ENCODE measurements at regions of chr15 and their contacts with region 1.

Region 1: DNA sequence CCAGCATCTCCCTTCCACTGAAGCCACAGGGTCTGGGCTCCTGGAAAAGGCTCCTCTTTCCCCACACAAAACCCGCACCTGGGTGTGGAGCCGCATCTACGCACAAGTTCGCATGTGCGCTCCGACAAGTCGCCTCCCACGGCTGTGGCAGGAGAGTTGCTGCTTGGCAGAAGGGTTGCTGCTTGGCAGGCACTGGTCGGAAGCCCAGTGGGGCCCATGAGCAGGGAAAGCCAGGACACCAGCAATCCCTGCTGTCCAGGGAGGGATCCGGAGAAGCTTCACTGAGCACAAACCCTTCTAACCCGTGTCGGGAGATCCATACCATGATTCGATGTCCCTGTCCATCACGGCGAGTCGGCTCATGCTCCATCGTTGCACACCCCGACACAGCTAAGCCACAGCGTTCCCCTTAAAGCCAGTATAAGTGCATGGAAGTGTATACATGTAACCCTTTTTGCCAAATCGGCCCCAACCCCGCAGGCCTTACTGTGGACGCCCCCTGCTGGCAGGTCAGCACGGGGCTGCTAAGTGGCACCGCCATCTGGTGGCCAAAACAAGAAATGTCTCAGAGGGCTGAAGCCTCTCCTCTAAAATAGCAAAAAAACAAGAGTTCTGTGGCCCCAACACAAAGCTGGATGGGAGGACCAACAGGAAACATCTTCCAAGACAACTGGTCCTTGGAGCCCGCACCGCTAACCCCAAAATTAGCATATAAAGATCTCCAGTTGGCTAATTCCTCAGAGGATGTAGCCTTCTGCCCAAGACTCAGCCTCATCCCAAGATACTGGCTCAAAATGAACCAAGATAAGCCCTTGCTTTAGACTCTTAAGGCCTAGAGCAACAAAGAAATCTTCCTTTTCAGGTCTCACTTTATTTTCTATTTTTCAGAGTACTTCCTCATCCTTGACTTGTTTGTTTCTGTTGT is 8.3 kb downstream of the ANKRD63 start:
- DNase-seq: peak; percentile 89
- ATAC-seq: peak; percentile 81
- H3K4me3 Mint-ChIP-seq: no peak overlapping the region
- H3K27ac Mint-ChIP-seq: no peak overlapping the region
- H3K4me1 Mint-ChIP-seq: no peaks in the 10 kb centered on the region
- H3K27me3 Mint-ChIP-seq: peaks cover 14% of the 10 kb centered on the region
- CTCF ChIP-seq: peak; percentile 100

Region 2: DNA sequence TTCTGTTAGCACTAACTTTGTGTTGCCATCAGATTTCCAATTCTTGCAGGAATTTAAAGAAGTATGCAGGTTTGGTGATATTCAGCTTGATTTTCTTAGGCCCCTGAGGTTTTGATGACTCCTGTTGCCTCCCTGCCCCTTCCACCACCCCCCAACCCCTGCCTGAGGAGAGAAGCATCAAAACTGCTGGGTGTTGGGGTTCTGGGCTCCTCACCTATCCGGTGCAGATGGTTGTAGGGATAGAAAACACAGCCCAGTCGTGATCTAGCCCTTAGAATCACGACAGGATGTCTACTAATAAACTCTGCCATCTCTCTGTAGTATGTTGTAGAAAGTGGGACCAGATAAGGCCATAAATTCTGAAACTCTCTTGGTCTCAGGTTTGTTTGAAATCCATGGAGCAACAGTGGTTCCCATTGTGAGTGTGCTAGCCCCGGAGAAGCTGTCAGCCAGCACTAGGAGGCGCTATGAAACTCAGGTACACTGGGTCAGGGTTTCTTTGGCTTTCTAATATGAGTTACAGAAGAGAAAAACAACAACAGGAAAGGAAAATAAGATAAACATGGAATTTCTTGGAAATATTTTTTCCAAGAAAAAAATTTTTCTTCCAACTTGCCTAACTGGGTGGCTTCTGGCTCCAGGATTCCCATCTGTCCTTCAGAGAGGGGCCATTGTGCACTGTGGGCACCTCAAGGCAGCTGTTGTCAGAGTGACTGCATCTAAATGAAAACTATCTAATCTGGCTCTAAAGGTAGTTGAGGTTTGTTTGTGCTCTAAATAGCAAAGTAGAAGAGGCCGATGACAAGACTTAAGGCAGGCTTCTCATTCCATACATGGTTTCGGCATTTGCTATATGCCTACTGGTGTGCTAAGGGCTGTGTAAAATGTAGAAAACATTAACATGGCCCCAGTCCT is 244.4 kb before region 1 on chr15:
- CTCF ChIA-PET with region 1: interaction called, 68 read pairs
- POLR2A ChIA-PET with region 1: no interaction called
- intact Hi-C with region 1: no loop called
- DNase-seq: peak; percentile 49
- ATAC-seq: peak; percentile 51
- H3K4me3 Mint-ChIP-seq: no peak overlapping the region
- H3K27ac Mint-ChIP-seq: no peak overlapping the region
- H3K4me1 Mint-ChIP-seq: peaks cover 5% of the 10 kb centered on the region
- H3K27me3 Mint-ChIP-seq: no peaks in the 10 kb centered on the region
- CTCF ChIP-seq: peak; percentile 60

Region 3: DNA sequence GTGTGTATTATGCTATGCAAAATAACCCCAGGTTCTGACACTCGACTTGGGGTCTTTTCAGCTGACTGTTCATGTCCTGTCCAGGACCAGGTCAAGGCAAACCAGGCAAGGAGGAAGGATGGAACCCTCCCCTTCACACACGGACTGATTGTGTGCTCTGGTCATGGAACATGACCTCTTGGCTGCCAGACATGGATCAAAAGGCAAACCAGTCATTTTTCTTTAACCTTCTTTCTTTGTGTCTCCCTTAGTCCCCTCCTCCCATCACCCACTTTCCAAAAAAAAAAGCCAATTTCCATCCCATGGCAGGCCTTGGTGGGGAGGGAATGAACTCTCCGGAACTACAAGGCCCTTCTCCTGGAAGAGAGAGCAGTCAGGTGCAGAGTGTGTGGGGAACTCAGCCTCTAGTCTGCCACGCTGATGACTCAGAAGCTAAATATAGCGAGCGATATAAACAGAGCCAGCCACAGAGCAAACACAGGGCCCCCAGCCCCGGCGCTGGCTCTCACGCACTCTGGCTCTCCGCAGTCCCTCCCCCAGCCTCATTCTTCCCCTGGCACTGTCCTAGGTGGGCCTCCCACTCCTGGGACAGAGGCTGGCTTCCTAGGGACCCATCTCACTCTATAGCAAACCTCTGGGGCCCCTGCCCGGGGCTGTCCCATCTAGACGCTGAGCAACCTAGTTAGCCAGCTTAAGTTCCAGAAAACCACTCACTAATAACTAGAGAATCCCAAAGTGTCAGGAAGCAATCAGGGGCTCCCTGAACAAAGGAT is 175.9 kb before region 1 on chr15:
- CTCF ChIA-PET with region 1: interaction called, 10 read pairs
- POLR2A ChIA-PET with region 1: no interaction called
- intact Hi-C with region 1: no loop called
- DNase-seq: peak; percentile 87
- ATAC-seq: peak; percentile 95
- H3K4me3 Mint-ChIP-seq: peak overlapping the region; percentile 44
- H3K27ac Mint-ChIP-seq: peak overlapping the region; percentile 97
- H3K4me1 Mint-ChIP-seq: peaks cover 72% of the 10 kb centered on the region
- H3K27me3 Mint-ChIP-seq: peaks cover 3% of the 10 kb centered on the region
- CTCF ChIP-seq: no peak

Region 4: DNA sequence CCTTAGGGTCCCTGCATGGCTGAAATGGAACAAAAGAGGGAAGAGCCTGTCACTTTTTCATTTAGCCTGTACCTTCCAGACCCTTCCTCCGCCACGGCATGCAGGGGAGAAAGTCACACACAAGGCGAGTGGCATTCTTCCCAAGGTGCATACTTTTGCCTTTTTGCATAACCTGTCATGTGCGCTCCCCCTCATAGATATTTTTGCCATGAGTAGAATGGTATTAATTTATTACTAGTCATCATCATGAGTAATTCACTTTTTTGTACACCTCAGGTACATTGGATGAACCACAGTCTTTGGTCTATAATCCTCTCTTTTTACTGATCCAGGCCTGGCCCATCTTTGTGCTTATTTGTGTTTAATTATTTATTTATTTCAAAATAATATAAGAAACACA is 122.6 kb before region 1 on chr15:
- CTCF ChIA-PET with region 1: no interaction called
- POLR2A ChIA-PET with region 1: no interaction called
- intact Hi-C with region 1: no loop called
- DNase-seq: no peak
- ATAC-seq: no peak
- H3K4me3 Mint-ChIP-seq: no peak overlapping the region
- H3K27ac Mint-ChIP-seq: no peak overlapping the region
- H3K4me1 Mint-ChIP-seq: no peaks in the 10 kb centered on the region
- H3K27me3 Mint-ChIP-seq: no peaks in the 10 kb centered on the region
- CTCF ChIP-seq: no peak

Region 5: DNA sequence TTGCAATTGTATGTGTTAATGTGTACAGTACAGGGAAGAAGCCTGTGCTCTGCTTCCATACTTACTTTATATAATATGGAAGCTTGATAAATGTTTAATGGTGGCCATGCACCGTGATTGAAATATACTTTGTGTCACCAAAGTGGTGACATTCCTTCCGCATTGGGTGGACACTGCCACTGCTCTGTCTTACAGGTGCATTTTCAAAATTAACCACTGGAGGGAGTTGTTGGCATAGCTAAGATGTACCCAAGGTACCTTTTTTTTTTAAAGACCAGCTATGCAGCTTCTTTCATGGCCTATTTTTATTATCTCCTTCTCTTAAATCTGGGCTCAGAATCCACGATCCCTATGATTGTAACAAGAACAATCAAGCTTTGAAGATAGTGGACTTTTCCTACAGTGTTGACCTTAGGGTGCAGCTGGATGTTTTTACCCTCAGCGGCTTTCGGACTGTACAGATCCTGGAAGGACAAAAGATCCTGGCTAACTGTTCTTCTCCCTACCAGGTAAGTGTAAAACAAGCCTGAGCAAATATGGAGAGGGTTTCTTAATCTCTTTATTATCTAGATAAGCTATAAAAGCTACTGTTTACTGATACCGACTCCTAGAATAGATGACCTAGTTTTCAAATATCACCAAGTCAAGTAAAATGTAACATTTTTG is 57.3 kb before region 1 on chr15:
- CTCF ChIA-PET with region 1: interaction called, 143 read pairs
- POLR2A ChIA-PET with region 1: interaction called, 3 read pairs
- intact Hi-C with region 1: loop called (anchors 1 kb)
- DNase-seq: peak; percentile 52
- ATAC-seq: peak; percentile 93
- H3K4me3 Mint-ChIP-seq: no peak overlapping the region
- H3K27ac Mint-ChIP-seq: no peak overlapping the region
- H3K4me1 Mint-ChIP-seq: no peaks in the 10 kb centered on the region
- H3K27me3 Mint-ChIP-seq: no peaks in the 10 kb centered on the region
- CTCF ChIP-seq: peak; percentile 84

Region 6: GRCh38 chr15:40238532-40239403 is 35.8 kb before region 1 on chr15 and contains the start of gene PAK6:
- CTCF ChIA-PET with region 1: interaction called, 55 read pairs
- POLR2A ChIA-PET with region 1: interaction called, 3 read pairs
- intact Hi-C with region 1: no loop called
- DNase-seq: peak; percentile 65
- ATAC-seq: peak; percentile 83
- H3K4me3 Mint-ChIP-seq: no peak within 1 kb of the TSS
- H3K27ac Mint-ChIP-seq: no peak within 1 kb of the TSS
- H3K4me1 Mint-ChIP-seq: peaks cover 7% of the 10 kb centered on the region
- H3K27me3 Mint-ChIP-seq: peaks cover 18% of the 10 kb centered on the region
- CTCF ChIP-seq: no peak
- total RNA-seq, gene PAK6: 0.67 to 0.83 TPM

Region 7: DNA sequence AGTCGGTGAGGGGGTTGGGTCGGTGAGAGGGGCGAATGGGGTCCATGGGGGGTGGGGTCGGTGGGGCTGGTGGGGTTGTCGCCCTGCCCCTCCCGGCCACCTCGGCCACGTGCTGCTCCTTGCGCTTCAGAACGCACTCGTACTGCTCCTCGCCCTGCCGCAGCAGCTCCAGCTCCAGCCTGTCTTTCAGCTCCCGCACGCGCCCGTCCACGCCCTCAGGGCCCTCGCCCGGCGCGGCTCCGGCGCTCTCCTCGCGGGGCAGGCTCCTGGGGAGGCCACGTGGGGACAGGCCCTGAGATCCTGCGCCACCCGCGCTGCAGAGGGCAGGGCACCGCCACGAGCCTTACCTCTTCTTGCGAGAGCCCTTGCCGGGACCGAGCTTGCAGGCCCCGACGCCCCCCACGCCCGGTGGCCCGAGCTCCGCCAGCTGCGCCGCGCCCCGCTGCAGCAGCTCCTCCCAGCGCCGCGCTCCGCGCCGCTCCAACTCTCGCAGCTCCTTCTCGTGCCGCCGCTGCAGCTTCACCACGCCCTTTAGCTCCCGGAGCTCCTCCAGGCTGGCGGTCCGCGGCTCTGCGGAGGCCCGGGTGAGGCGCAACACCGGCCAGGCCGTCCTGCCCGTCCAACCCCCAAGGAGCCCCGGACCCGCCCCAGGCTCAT is 16.4 kb after region 1 on chr15:
- CTCF ChIA-PET with region 1: interaction called, 44 read pairs
- POLR2A ChIA-PET with region 1: interaction called, 4 read pairs
- intact Hi-C with region 1: no loop called
- DNase-seq: no peak
- ATAC-seq: no peak
- H3K4me3 Mint-ChIP-seq: no peak overlapping the region
- H3K27ac Mint-ChIP-seq: no peak overlapping the region
- H3K4me1 Mint-ChIP-seq: no peaks in the 10 kb centered on the region
- H3K27me3 Mint-ChIP-seq: no peaks in the 10 kb centered on the region
- CTCF ChIP-seq: no peak

Region 8: DNA sequence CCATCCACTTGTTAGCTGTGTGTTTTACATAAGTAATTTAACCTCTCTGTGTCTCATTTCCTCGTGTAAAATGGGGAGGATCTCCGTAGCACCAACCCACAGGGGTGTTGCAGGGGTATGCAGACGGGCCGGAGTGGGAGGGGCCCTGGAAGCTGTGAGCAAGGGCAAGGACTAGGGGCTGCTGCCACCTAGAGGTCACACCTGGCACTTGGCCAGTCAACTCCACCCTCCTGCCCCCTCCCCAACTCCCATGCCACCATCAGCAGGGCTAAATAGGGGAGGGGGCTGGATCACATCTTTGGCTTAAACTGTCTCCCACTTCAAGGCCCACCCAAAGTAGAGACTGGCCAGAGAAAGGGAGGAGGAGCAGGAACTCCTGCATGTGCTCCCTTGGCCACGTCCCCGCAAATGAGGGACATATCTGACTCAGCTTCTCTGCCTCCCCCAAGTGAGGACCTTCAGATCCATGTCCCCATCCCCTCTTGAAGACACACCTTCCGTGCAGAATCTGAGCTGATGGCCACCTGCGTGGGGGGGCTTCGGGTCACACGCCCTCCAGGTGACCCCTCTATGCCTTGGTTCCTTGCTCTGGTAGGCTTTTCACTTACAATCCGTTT is 63.5 kb after region 1 on chr15:
- CTCF ChIA-PET with region 1: interaction called, 219 read pairs
- POLR2A ChIA-PET with region 1: interaction called, 4 read pairs
- intact Hi-C with region 1: loop called (anchors 2 kb)
- DNase-seq: peak; percentile 88
- ATAC-seq: peak; percentile 96
- H3K4me3 Mint-ChIP-seq: no peak overlapping the region
- H3K27ac Mint-ChIP-seq: no peak overlapping the region
- H3K4me1 Mint-ChIP-seq: peaks cover 14% of the 10 kb centered on the region
- H3K27me3 Mint-ChIP-seq: no peaks in the 10 kb centered on the region
- CTCF ChIP-seq: peak; percentile 92

Region 9: DNA sequence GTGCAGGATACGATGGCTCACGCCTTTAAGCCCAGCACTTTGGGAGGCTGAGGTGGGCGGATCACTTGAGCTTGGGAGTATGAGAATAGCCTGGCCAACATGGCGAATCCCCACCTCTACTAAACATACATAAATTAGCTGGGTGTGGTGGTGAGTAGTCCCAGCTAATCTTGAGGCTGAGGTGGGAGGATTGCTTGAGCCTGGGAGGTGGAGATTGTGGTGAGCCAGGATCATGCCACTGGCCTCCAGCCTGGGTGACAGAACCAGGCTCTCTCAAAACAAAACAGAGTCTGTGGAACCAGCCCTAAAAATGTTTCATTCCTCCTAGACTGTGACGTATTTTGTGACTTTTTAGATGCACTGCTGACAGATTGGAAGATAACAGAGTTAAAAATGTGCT is 386.1 kb after region 1 on chr15:
- CTCF ChIA-PET with region 1: no interaction called
- POLR2A ChIA-PET with region 1: no interaction called
- intact Hi-C with region 1: no loop called
- DNase-seq: no peak
- ATAC-seq: no peak
- H3K4me3 Mint-ChIP-seq: no peak overlapping the region
- H3K27ac Mint-ChIP-seq: no peak overlapping the region
- H3K4me1 Mint-ChIP-seq: no peaks in the 10 kb centered on the region
- H3K27me3 Mint-ChIP-seq: no peaks in the 10 kb centered on the region
- CTCF ChIP-seq: no peak

Measured in activated CD8-positive, alpha-beta T cell treated with anti-CD3 and anti-CD28 coated beads for 36 hours (primary cell).